T-cell (primary cell): ENCODE measurements at regions of chr7 and their contacts with region 1.

Region 1: GRCh38 chr7:132379292-132379691 is 197.0 kb downstream of the PLXNA4 start:
- DNase-seq: no peak
- ATAC-seq: no peak
- H3K4me3 ChIP-seq: no peak overlapping the region
- H3K4me3 Mint-ChIP-seq: no peak overlapping the region
- H3K27ac ChIP-seq: no peak overlapping the region
- H3K27ac Mint-ChIP-seq: no peak overlapping the region
- H3K4me1 ChIP-seq: no peaks in the 10 kb centered on the region
- H3K4me1 Mint-ChIP-seq: no peaks in the 10 kb centered on the region
- H3K27me3 ChIP-seq: peaks cover 0 to 8% of the 10 kb centered on the region in 2 experiments
- H3K27me3 Mint-ChIP-seq: peaks cover 6 to 10% of the 10 kb centered on the region in 2 donors

Region 2: DNA sequence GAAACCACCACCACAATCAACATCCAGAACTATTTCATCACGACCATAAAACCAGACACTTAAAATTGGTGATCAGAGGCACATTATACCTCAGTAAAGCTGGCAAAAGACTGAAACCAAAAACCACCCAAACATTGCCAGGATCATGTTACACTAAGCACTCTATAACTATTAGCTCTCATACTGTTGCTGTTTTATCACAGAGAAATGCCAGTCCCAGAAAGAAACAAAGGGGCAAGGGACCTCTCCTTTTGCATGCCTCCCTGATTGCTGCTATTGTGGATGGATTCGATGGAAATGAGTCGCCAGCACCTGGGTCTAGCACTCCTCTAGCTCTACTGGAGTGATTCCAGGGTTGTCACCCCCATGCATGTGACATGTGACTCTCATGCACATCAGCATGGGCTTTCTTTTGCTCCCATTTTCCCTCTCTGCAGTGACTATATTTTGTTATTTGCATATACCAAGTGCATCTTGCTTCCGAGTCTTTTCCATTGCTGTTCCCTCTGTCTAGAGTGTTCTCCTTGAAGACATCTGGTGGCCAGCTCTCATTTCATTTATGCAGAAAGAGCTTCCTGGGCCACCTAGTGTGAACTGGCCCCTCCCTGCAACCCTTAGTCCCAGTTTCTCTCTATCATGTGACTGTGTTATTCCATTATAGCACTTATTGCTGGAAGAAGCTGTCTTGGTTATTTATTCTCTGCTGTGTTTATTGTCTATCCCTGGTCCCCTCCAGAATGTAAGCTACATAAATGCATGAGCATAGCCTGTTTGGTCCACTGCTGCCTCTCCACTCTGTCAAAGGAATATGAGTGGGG is 103.7 kb before region 1 on chr7:
- CTCF ChIA-PET with region 1: no interaction called
- POLR2A ChIA-PET with region 1: interaction called in 1 of 2 experiments, 10 read pairs
- DNase-seq: no peak
- ATAC-seq: no peak
- H3K4me3 ChIP-seq: no peak overlapping the region
- H3K4me3 Mint-ChIP-seq: no peak overlapping the region
- H3K27ac ChIP-seq: no peak overlapping the region
- H3K27ac Mint-ChIP-seq: no peak overlapping the region
- H3K4me1 ChIP-seq: no peaks in the 10 kb centered on the region
- H3K4me1 Mint-ChIP-seq: no peaks in the 10 kb centered on the region
- H3K27me3 ChIP-seq: peaks cover 0 to 8% of the 10 kb centered on the region in 2 experiments
- H3K27me3 Mint-ChIP-seq: peaks cover 16 to 21% of the 10 kb centered on the region in 2 donors

Region 3: GRCh38 chr7:132394283-132395198 is 15.2 kb after region 1 on chr7:
- CTCF ChIA-PET with region 1: no interaction called
- POLR2A ChIA-PET with region 1: no interaction called
- DNase-seq: peak in 24 of 35 experiments; percentile 7 to 71 (median 21)
- ATAC-seq: peak in 2 of 4 experiments; percentile 65 to 68
- H3K4me3 ChIP-seq: no peak overlapping the region
- H3K4me3 Mint-ChIP-seq: no peak overlapping the region
- H3K27ac ChIP-seq: no peak overlapping the region
- H3K27ac Mint-ChIP-seq: no peak overlapping the region
- H3K4me1 ChIP-seq: peaks cover 0 to 5% of the 10 kb centered on the region in 2 experiments
- H3K4me1 Mint-ChIP-seq: peaks cover 4 to 14% (median 11%) of the 10 kb centered on the region in 3 donors
- H3K27me3 ChIP-seq: peaks cover 0 to 11% of the 10 kb centered on the region in 2 experiments
- H3K27me3 Mint-ChIP-seq: peaks cover 1 to 6% of the 10 kb centered on the region in 2 donors